AG04450 (cell line): ENCODE measurements at regions of chr10 and their contacts with region 1.

Region 1: DNA sequence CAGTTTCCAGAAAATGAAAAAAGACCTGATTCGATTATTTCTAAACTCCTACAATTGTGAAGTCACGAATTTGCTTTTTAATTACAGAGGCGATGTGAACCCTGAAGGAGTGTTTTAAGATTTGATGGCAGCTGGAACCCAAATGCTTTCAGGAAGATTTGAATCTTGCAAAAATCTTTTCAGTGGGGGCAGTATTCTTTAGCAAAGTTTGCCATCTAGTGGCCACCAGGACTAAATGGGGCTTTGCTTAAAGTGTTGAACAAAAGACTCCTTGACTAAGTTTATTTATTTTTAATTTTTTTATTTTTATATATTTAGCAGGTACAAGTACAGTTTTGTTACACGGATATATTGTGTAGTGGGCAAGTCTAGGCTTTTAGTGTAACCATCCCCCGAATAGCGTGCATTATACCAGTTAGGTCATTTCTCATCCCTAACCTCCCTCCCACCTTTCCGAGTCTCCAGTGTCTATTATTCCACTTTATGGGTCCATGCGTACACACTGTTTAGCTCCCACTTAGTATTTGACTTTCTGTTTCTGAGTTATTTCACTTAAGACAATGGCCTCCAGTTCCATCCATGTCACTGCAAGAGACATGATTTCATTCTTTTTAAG is 98.8 kb downstream of the CACNB2 start:
- DNase-seq: peak; percentile 39
- H3K4me3 ChIP-seq: no peak overlapping the region
- H3K27ac ChIP-seq: no peak overlapping the region
- H3K27me3 ChIP-seq: no peaks in the 10 kb centered on the region
- CTCF ChIP-seq: peak; percentile 82

Region 2: DNA sequence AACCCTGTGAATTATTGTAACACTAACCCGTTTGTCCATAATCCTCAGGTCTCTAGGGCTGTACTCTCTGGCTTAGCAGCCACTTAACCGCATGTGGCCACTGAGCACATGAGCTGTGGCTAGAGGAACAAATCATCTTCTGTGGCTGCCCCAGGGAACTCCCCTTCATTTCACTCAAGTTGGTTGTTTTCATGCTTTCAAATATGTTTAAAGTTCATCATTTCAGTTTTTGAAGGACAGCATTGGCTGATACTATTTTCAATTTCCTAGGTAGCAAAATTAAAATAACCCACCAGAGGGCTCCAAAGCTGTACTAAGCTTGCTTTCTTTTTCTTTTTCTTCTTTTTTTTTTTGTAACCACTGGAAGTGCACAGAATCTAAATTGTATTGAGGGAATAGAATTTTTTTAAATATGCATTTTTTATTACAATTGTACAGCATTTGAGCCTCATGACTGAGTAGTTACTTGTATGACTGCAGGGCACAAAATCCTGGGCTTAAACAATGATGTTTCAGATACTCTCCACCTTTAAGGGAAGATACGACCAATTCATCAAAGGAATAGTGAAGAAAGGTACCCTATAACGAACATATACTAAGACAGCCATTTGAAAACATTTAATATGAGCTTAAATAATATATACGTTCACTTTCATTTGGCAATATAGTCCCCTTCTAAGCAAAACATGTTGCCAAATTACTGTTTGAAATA is 391.2 kb before region 1 on chr10:
- CTCF ChIA-PET with region 1: interaction called, 42 read pairs
- POLR2A ChIA-PET with region 1: no interaction called
- DNase-seq: no peak
- H3K4me3 ChIP-seq: no peak overlapping the region
- H3K27ac ChIP-seq: no peak overlapping the region
- H3K27me3 ChIP-seq: peaks cover 2% of the 10 kb centered on the region
- CTCF ChIP-seq: peak; percentile 63

Region 3: DNA sequence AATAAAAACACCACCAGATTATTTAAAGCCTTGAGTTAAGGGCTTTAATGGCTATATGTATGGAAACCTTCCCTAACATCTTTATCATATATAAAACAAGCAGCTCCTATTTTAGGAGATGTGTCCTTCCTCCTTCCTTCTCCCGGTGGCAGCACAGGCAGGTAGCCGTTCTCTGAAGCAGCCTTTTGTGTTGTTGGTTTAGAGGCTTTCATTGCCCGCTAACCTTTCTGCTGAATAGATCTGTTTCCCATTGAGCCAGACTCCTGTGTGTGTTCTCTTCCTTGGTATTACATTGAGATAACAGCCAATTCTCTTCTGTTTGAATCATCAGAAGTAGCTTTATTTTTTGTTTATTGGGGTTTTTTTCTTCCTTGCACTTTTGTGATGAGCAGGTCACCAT is 32.5 kb after region 1 on chr10:
- CTCF ChIA-PET with region 1: no interaction called
- POLR2A ChIA-PET with region 1: no interaction called
- DNase-seq: no peak
- H3K4me3 ChIP-seq: no peak overlapping the region
- H3K27ac ChIP-seq: no peak overlapping the region
- H3K27me3 ChIP-seq: no peaks in the 10 kb centered on the region
- CTCF ChIP-seq: no peak

Region 4: GRCh38 chr10:18350340-18350739 is 111.4 kb after region 1 on chr10:
- CTCF ChIA-PET with region 1: no interaction called
- POLR2A ChIA-PET with region 1: no interaction called
- DNase-seq: no peak
- H3K4me3 ChIP-seq: no peak overlapping the region
- H3K27ac ChIP-seq: no peak overlapping the region
- H3K27me3 ChIP-seq: no peaks in the 10 kb centered on the region
- CTCF ChIP-seq: no peak

Region 5: DNA sequence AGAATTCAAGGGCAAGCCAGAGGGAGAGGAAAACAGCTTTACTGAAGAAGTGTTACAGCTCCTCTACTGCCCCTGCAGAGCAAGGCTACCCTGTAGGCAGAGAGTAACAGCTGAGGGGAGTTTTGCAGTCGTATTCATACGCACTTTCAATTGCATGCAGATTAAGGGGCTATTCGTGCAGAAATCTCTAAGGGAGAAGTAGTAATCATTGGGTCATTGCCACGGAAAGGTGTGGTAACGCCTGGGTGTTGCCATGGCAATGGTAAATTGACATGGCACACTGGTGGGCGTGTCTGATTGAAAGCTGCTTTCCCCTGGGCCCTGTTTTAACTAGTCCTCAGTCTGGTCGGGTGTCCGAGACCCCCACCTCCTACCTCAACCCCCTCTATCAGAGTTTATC is 185.2 kb after region 1 on chr10:
- CTCF ChIA-PET with region 1: no interaction called
- POLR2A ChIA-PET with region 1: no interaction called
- DNase-seq: no peak
- H3K4me3 ChIP-seq: no peak overlapping the region
- H3K27ac ChIP-seq: no peak overlapping the region
- H3K27me3 ChIP-seq: no peaks in the 10 kb centered on the region
- CTCF ChIP-seq: no peak

Region 6: GRCh38 chr10:18561861-18562551 is 323.0 kb after region 1 on chr10:
- CTCF ChIA-PET with region 1: no interaction called
- POLR2A ChIA-PET with region 1: no interaction called
- DNase-seq: no peak
- H3K4me3 ChIP-seq: no peak overlapping the region
- H3K27ac ChIP-seq: no peak overlapping the region
- H3K27me3 ChIP-seq: no peaks in the 10 kb centered on the region
- CTCF ChIP-seq: no peak